Activated CD8-positive, alpha-beta T cell treated with anti-CD3 and anti-CD28 coated beads for 36 hours (primary cell): ENCODE measurements at regions of chr19 and their contacts with region 1.

Region 1: DNA sequence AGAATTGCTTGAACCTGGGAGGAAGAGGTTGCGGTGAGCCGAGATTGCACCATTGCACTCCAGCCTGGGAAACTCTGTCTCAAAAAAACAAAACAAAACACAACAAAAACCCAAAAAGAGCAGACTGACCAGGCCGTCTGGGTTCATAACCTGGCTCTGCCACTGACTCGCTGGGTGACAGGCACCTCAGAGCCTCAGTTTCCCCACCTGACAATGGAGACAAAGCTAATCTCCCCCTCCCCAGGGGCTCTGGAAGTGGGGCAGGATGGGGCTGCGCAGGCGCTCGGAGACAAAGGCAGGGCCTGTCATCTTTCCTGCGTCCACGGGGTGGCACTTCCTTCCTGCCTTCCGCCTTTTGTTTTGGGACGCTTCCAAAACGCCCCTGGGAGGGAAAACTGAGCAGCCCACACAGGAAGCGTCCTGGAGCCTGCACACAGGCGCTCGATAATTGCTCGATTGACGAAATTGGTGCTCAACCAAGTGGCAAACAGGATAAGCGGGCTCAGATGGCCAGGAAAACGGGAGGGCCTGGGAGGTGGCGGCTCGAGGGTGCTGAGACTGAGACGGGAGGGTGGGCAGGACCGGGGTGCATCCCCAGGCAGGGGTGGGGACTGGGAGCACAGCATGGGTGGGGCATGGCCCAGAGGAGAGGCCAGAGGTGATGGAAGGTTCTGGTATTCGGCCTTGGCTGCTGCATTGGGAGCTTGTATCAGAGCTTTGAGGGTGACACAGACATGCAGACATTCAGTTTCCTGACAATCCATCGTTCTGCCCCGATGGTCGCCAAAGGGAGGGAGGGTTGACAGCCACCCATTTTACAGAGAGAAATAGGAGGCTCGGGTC is 17.8 kb downstream of the SPC24 start:
- DNase-seq: peak; percentile 64
- ATAC-seq: peak; percentile 76
- H3K4me3 Mint-ChIP-seq: peak overlapping the region; percentile 63
- H3K27ac Mint-ChIP-seq: no peak overlapping the region
- H3K4me1 Mint-ChIP-seq: peaks cover 8% of the 10 kb centered on the region
- H3K27me3 Mint-ChIP-seq: no peaks in the 10 kb centered on the region
- CTCF ChIP-seq: peak; percentile 88

Region 2: GRCh38 chr19:10946964-10947657 is 190.7 kb before region 1 on chr19:
- CTCF ChIA-PET with region 1: no interaction called
- POLR2A ChIA-PET with region 1: no interaction called
- intact Hi-C with region 1: no loop called
- DNase-seq: no peak
- ATAC-seq: no peak
- H3K4me3 Mint-ChIP-seq: no peak overlapping the region
- H3K27ac Mint-ChIP-seq: no peak overlapping the region
- H3K4me1 Mint-ChIP-seq: peaks cover 4% of the 10 kb centered on the region
- H3K27me3 Mint-ChIP-seq: no peaks in the 10 kb centered on the region
- CTCF ChIP-seq: no peak

Region 3: DNA sequence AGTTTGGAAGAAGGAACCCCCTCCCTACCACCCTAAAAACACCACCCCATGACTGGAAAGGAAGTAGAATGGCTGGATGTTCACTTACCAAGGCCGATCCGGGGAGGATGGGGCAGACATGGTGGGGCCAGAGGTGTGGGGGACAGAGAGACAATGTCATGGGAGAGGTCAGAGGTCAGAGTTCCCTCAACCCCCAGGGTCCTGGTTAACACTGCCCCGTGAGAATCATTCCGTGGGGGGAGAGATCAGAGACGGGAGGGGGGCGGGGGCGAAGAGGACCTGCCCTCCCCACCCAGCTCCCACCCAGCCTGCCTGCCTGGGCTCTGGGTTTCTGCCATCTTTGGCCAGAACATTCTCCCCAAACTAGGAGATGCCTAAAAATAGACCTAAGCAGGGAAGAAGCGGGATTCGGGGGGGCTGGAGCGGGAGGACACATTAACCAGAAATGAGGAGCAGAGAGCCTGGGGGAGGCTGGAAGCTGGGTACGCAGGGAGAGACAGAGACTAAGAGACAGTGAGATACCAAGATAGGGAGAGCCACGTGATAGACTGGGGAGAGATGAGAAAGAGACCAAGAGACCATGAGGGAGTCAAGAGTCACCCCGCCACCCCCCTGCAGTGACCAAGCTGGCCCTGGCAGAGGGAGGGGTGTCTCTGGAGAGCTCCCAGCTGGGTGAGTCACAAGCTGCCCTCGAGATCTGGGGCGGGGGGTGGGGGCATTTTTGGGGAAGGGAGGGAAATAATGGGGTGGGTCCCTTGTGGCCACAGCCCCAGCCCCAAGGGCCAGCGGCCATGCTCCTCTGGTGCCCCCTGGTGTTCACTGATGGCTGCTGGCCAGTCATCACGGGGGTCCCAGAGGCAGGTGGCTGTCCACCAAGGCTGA is 65.7 kb after region 1 on chr19:
- CTCF ChIA-PET with region 1: interaction called, 6 read pairs
- POLR2A ChIA-PET with region 1: interaction called, 4 read pairs
- intact Hi-C with region 1: loop called (anchors 5 kb)
- DNase-seq: peak; percentile 48
- ATAC-seq: no peak
- H3K4me3 Mint-ChIP-seq: no peak overlapping the region
- H3K27ac Mint-ChIP-seq: no peak overlapping the region
- H3K4me1 Mint-ChIP-seq: no peaks in the 10 kb centered on the region
- H3K27me3 Mint-ChIP-seq: no peaks in the 10 kb centered on the region
- CTCF ChIP-seq: peak; percentile 82